Dorsolateral prefrontal cortex (tissue), 120 donors: ENCODE measurements at regions of chrX and their contacts with region 1.

Region 1: GRCh38 chrX:108199691-108200090 is 108.1 kb downstream of the ATG4A start:
- DNase-seq: no peak
- H3K4me3 ChIP-seq: no peak overlapping the region
- H3K27ac ChIP-seq: no peak overlapping the region
- H3K27me3 ChIP-seq: peaks cover 0 to 98% (median 44%) of the 10 kb centered on the region in 45 donors
- CTCF ChIP-seq: peak in 55 of 56 donors; percentile 11 to 69 (median 51)

Region 2: DNA sequence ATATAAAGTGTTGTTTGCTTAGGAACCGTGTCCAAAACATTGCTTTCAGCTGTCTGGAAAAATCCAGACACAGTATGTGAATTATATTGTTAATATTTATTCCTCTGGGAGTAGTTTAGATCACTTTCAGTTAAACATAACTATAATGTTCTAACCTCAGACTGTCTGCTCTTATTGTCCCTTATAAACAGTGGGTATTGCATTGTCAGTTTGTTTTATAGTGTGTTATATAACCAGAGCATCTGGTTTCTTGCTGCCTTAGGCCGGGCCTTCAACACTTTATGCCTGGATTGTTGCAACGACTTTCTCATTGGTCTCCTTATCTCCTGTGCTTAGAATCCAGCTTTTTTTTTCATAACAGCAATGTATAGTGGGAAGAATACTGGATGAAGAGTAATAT is 81.7 kb before region 1 on chrX:
- intact Hi-C with region 1: no loop called
- DNase-seq: no peak
- H3K4me3 ChIP-seq: no peak overlapping the region
- H3K27ac ChIP-seq: no peak overlapping the region
- H3K27me3 ChIP-seq: peaks cover 0 to 89% (median 25%) of the 10 kb centered on the region in 45 donors
- CTCF ChIP-seq: no peak

Region 3: DNA sequence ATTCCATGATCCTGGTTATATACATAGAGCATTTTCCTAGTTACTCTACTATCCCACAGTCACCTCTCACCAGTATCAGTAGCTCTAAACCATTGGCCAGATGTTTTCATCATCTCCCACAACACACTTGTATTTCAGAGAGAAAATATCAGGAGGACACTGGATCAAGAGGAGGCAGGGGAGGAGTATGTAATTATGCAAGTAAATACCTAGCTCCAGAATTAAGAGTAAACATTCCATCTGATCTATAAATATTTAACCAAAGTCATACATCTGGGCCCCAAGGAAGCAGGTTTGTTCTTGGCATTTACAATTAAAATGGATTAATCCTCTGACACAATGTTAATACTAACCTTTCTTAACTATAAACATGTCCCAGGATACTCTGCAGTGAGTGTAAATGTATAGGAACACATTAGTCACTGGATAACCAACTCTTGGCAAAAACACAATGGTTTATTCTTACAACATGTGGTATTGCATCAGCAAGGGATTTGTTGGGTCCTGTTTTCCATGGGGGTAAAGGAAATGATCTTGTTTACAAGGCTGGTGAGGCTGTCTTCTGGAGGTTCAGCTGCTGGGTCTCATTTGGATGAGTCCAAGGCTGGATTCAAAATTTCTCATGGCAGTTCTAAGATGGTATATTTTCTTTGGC is 62.0 kb after region 1 on chrX:
- intact Hi-C with region 1: no loop called
- DNase-seq: no peak
- H3K4me3 ChIP-seq: no peak overlapping the region
- H3K27ac ChIP-seq: no peak overlapping the region
- H3K27me3 ChIP-seq: peaks cover 0 to 88% (median 36%) of the 10 kb centered on the region in 45 donors
- CTCF ChIP-seq: no peak

Region 4: DNA sequence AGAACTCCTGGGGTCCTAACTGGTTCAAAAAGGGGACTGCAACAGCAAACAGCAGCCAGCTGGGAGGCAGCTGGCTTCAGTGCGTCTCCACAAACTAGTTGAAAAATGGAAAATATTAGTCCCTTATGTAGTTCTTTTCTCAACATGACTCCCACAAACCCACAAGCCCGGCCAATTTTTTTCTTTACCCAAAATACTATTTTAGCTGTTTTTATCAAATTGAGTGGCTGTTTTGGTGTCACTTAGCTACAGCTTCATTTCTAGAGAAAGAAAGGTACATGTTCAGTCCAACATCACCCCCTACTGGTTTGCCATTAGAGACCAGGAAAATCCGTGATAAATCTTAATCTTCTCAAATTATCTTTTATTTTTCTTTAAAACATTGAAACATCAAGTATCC is 1185.0 kb after region 1 on chrX:
- intact Hi-C with region 1: loop called in 1 of 2 experiments (anchors 10 kb)
- DNase-seq: no peak
- H3K4me3 ChIP-seq: no peak overlapping the region
- H3K27ac ChIP-seq: no peak overlapping the region
- H3K27me3 ChIP-seq: peaks cover 0 to 95% (median 48%) of the 10 kb centered on the region in 45 donors
- CTCF ChIP-seq: peak in 55 of 56 donors; percentile 23 to 70 (median 52)